ENCODE measurements at regions of chr12 and their contacts with region 1.

Region 1: DNA sequence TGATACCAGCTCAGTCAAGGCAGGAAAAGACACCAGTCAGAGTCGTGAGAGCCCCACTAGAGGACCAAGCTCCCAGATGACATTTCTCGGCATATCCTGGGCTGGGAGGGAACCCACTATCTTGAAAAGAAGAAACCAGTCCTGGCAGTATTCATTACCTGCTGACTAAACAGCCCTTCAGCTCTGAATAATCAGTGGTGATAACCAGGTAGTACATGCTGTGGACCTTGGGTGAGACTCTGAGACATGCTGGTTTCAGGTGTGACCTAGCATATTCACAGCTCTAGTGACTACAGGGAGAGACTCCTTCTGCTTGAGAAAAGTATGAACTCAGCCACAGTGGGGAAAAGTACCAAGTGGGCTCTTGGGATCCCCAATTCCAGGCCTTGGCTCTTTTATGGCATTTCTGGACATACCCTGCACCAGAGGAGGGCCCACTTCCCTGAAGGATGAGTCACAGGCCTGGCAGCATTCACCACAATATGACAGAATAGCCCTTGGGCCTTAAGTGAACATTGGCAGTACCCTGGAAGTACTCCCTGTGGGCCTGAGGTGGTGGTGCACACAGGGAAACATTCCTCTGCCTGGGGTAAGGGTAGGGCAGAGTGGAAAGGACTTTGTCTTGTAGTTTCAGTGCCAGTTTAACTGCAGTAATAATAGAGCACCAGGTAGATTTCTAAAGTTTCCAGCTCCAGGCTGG is 82.6 kb upstream of the SLC38A4 start:
- DNase-seq: peak; percentile 82
- ATAC-seq: peak; percentile 78
- H3K4me3 ChIP-seq: no peak overlapping the region
- H3K27ac ChIP-seq: peak overlapping the region; percentile 60
- H3K4me1 ChIP-seq: peaks cover 16% of the 10 kb centered on the region
- H3K27me3 ChIP-seq: no peaks in the 10 kb centered on the region
- CTCF ChIP-seq: no peak

Region 2: DNA sequence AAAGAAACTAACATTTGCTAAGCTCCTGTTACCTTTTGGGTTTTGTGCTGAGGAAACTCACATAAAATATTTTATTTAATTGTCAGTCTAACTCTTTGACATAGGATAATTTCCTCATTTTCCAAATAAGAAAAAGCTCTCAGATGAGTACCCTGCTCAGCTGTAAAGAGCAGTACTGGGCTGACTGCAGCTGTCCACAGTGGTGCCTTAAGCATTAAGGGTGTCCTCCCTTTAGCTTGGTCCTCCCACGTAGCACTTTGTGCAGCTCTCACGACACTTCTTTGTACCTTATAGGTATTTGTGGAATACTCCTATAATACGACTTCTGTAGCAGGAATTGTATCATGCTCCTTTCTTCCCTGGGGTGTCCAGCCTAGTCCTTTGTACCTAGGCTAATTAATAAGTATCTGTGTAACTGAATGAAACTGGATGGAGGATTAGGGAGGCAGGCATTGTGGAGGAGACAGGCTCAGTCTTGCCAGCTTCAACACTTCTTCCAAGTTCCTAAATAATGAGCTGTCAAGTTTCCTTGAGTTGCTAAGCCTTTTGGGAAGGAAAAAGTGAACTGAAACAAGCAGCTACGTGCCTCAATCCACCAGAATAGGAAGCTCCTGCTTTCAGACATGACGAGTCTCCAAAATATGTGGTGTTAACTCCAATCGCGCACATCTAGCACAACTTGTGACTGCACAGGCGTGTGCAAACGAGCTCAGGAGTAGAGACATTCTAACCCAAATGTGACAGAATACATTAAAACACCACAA is 205.6 kb before region 1 on chr12:
- CTCF ChIA-PET with region 1: no interaction called
- POLR2A ChIA-PET with region 1: no interaction called
- intact Hi-C with region 1: no loop called
- DNase-seq: no peak
- ATAC-seq: no peak
- H3K4me3 ChIP-seq: no peak overlapping the region
- H3K27ac ChIP-seq: no peak overlapping the region
- H3K4me1 ChIP-seq: no peaks in the 10 kb centered on the region
- H3K27me3 ChIP-seq: no peaks in the 10 kb centered on the region
- CTCF ChIP-seq: no peak

Region 3: DNA sequence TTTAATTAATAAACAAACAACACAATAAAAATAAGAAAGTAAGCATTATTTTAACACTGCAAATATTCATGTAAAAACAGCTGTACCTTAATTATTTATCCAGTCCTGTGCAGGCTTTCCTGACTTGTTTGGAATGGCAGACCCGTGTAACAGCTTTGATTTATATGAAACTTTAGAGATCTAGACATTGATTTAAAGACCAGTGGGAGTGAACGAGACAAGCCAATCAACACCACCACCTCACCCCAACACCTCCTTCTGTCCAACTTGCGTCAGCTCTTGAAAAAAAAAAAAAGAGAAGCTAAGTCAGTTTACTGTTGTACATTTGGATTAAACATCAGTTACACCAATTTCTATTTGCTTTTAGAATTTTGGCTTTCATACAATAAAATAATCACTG is 104.9 kb before region 1 on chr12:
- CTCF ChIA-PET with region 1: no interaction called
- POLR2A ChIA-PET with region 1: interaction called, 18 read pairs
- intact Hi-C with region 1: no loop called
- DNase-seq: no peak
- ATAC-seq: no peak
- H3K4me3 ChIP-seq: no peak overlapping the region
- H3K27ac ChIP-seq: no peak overlapping the region
- H3K4me1 ChIP-seq: no peaks in the 10 kb centered on the region
- H3K27me3 ChIP-seq: no peaks in the 10 kb centered on the region
- CTCF ChIP-seq: no peak

Region 4: DNA sequence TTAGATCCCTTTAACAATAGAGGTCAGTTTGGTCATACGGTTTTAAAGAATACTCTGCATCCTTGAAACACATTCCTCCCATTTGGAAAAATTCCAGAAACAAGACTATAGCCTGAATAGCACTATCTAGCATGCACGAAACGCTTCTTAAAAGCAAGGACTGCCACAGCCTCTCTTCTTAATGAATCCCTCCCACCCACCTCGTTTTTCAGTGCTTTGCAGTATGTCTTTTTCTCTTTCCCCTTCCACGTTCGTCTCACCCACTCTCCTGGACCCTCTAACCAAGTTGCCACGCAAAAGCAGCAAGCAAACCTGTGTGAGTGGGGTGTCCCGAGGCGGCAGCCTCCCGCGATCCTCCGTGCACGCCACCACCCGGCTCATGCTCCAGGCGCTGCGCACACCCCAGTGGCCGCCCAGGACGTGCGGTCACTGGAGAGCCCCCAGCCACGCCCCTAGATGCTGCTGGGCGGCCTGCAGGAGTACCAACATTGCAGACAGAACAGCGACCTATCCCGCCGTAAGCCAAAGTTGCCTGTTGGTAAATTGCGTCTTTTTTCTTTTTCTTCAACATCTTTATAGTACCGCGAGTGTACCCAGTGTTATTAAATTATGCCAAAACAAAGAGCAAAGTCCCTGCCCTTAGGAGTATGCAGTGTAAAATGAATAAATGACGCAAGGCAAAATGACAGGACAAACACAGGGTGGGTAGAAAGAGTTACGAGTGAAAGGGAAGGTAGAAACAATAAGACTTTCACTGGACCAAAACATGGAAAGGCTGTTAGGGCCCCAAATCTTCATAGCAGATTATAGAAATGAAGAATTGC is 82.6 kb before region 1 on chr12 and contains the start of gene SLC38A4:
- CTCF ChIA-PET with region 1: no interaction called
- POLR2A ChIA-PET with region 1: no interaction called
- intact Hi-C with region 1: no loop called
- DNase-seq: no peak
- ATAC-seq: no peak
- H3K4me3 ChIP-seq: no peak within 1 kb of the TSS
- H3K27ac ChIP-seq: no peak within 1 kb of the TSS
- H3K4me1 ChIP-seq: peaks cover 6% of the 10 kb centered on the region
- H3K27me3 ChIP-seq: no peaks in the 10 kb centered on the region
- CTCF ChIP-seq: no peak
- total RNA-seq, gene SLC38A4: not detected in 2 replicates

Measured in PC-3 (cell line).